ENCODE measurements at regions of chr5 and their contacts with region 1.

Region 1: GRCh38 chr5:74640450-74640953 is at the start of gene ENC1:
- DNase-seq: peak; percentile 92 to 95
- ATAC-seq: peak; percentile 94
- H3K4me3 ChIP-seq: peak within 1 kb of the TSS; percentile 30 to 54
- H3K27ac ChIP-seq: no peak within 1 kb of the TSS
- H3K4me1 ChIP-seq: no peaks in the 10 kb centered on the region
- H3K27me3 ChIP-seq: no peaks in the 10 kb centered on the region
- total RNA-seq, gene ENC1: 4.8 to 10.6 TPM

Region 2: GRCh38 chr5:73985145-73985544 is 655.4 kb before region 1 on chr5:
- intact Hi-C with region 1: loop called in 1 of 2 experiments (anchors 10 kb)
- DNase-seq: no peak
- ATAC-seq: no peak
- H3K4me3 ChIP-seq: no peak overlapping the region
- H3K27ac ChIP-seq: no peak overlapping the region
- H3K4me1 ChIP-seq: no peaks in the 10 kb centered on the region
- H3K27me3 ChIP-seq: no peaks in the 10 kb centered on the region

Region 3: GRCh38 chr5:74056789-74057164 is 583.7 kb before region 1 on chr5:
- intact Hi-C with region 1: loop called in 1 of 2 experiments (anchors 5 kb)
- DNase-seq: no peak
- ATAC-seq: no peak
- H3K4me3 ChIP-seq: no peak overlapping the region
- H3K27ac ChIP-seq: no peak overlapping the region
- H3K4me1 ChIP-seq: peaks cover 0 to 2% of the 10 kb centered on the region in 2 donors
- H3K27me3 ChIP-seq: no peaks in the 10 kb centered on the region

Region 4: DNA sequence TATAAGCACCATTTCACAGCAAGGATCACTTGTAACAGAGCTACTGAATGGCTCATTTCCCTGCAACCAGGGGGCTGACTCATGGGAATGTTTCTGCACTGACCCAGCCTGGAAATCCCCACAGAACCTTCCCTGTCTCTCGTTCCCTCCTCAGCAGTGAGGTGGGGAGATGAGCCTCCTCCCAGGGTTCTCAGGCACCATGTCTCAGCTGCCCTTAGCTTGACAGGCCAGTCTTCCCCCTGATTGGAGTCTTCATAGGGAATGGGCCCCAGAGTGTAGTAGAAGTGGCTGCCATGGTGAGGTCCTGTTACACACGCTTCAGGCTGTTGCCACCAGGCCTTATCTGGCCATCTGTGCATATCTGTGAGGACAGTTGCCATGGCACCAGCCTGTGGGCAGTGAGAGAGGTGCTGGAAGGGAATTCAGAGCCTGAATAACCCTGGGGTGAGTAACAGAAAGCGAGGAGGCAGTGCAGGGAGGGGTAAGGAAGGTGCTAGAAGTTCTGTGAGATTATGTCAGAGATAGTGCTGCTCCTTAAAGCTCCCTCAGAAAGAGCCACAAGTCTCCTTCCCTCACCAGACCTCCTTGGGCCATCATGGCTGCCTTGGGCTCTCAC is 324.3 kb before region 1 on chr5:
- intact Hi-C with region 1: loop called in 1 of 2 experiments (anchors 5 kb)
- DNase-seq: peak; percentile 88 to 89
- ATAC-seq: peak; percentile 66
- H3K4me3 ChIP-seq: no peak overlapping the region
- H3K27ac ChIP-seq: peak overlapping the region; percentile 98
- H3K4me1 ChIP-seq: peaks cover 0 to 5% of the 10 kb centered on the region in 2 donors
- H3K27me3 ChIP-seq: no peaks in the 10 kb centered on the region

Region 5: DNA sequence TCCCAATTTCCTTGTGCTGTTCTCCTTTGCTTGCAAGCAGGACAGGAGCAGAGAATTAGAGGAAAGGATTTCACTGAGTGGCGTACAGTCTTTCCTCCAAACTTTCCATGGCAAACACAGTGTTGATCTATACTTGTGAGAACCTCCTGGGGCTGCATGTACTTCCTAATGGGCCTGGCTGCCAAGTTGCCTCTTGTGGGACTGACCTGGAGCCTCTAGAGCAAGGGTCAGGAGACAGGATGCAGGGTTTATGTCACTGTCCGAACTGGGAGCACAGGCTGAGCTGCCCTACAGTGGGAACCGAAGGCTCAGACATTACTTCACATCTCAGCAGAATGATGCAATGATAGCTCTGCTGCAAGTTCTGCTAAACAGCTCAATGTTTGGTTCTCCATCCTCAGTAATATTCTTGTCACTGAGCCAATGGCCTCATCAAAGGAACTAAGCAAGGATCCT is 102.3 kb before region 1 on chr5:
- intact Hi-C with region 1: loop called in 1 of 2 experiments (anchors 10 kb)
- DNase-seq: peak in 1 of 2 donors; percentile 65
- ATAC-seq: peak; percentile 81
- H3K4me3 ChIP-seq: no peak overlapping the region
- H3K27ac ChIP-seq: no peak overlapping the region
- H3K4me1 ChIP-seq: no peaks in the 10 kb centered on the region
- H3K27me3 ChIP-seq: no peaks in the 10 kb centered on the region